ENCODE measurements at regions of chr17 and their contacts with region 1.

Region 1: GRCh38 chr17:38868817-38869525 is 887 bp upstream of the LASP1 start:
- DNase-seq: peak; percentile 92

Region 2: DNA sequence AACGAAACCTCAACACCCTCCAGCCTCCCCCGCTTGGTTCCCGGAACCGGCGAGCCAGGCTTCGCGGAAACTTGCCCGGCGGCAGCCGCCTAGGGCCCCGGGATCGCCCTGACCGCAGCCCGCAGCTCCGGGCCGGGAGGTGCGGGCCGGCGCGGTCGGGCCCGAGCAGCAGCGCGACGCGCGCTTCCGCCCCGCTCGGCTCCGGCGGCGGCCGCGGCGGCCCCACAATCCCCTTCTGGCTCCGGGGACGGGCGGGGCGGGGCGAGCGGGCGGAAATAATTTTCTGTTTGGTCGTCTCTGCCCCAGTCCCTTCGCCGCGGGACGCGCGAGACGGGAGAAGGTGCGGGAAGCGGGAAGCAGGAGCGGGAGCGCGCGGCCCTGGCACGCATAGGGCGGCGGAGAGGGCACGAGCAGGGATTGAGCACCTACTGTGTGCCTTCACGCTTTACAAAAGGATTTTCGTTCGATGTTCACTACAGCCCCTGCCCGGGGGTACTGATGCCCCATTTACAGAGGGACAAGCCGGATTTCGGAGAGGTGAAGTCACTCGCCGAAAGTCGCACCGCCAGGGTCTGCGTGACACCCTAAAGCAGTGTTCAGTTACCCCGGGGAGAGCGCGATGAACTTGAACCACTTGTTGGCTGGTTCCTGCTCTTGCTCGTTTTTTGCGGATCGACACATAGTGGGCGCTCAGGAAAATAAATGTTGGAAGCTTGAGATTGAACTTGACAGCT is 166.6 kb before region 1 on chr17:
- intact Hi-C with region 1: loop called (anchors 5 kb)
- DNase-seq: peak; percentile 94

Region 3: GRCh38 chr17:38777641-38778250 is 91.2 kb before region 1 on chr17:
- intact Hi-C with region 1: no loop called
- DNase-seq: no peak

Region 4: DNA sequence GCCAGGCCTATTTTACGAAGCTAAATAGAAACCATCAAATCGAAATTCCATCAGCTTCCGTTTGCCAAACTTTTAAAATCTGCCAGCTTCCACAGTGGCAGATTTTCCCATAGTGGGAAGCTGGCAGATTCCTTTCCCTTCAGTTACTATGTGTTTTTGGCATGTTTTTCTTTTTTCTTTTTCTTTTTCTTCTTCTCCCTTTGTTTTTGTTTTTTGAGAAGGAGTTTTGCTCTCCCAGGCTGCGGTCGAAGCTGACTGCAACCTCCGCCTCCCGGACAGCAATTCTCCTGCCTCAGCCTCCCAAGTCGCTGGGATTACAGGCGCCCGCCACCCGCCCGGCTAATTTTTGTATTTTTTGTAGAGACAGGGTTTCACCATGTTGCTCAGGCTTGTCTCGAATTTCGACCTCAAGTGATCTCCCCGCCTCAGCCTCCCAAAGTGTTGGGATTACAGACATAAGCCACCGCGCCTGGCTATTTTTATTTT is 43.2 kb before region 1 on chr17:
- intact Hi-C with region 1: no loop called
- DNase-seq: no peak

Region 5: DNA sequence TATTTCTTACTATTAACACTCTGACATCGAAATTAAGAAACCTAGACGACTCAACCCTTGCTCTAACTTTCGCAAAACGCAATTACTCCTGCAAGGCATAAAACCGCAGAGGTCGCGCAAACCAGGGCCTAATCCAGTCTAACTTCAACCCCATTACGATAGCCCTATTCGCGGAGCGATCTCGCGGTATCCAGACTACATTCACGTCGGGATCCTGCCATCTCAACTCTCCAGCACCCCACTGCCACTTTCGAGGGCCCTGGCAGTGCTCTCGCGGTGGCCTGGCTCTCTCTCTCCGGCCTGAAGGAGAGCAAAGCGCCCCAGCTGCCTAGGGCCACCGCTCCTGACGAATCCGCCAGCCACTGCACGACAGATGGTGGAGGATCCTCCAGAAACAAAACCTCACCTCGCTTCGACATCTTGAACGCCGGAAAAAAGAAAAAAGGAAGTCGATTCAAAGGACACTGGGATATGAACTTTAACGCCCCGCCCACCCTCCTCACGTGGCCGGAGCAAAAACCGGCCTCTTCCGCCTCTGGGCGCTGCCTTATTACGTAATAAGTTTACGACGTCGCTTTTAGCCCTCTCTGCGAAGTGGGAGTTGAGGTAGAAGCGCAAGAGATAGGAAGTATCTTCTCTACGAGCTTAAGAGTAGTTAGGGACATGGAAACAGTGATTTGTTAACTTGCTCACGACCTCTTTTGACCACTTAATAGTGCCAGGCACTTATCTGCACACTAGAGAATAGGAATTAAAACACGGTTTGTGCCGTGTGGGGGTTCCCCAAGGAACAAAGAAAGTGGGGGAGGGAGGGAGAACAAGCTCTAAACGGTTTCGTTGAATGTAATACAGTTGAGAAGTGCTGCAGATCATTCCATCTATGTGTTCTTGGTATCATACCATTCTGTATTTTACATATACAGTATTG is 15.4 kb before region 1 on chr17 and contains the start of gene RPL23:
- intact Hi-C with region 1: no loop called
- DNase-seq: peak; percentile 96
- total RNA-seq, gene RPL23: 564 TPM

Region 6: DNA sequence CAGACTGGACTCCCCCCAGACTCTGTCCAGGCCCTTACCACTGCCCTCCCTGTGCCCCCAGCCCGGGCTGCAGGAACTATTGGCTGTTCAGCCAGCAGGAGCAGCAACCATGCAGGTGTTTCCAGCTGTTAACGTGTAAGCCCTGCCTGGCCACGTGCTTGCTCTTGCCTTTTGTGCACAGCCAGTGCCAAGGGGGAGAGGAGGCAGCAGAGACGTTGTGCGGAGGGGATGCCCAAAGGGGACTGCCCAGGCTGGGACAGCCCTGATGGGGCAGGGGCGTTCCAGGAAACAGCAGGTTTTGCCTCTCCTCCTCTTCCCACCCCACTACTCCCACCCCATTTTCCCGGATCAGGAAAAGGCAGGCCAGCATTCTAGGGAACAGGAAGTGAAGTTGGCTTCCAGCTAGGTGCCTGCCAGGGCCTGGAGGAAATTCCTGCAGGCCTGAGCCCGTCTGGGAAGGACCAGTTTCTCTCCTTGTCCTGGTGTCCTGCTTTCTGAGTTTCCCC is 39.8 kb after region 1 on chr17:
- intact Hi-C with region 1: loop called (anchors 5 kb)
- DNase-seq: no peak

Region 7: GRCh38 chr17:38967290-38967738 is 98.3 kb after region 1 on chr17 and contains the start of gene FBXO47:
- intact Hi-C with region 1: loop called (anchors 10 kb)
- DNase-seq: peak; percentile 95
- total RNA-seq, gene FBXO47: not detected